ENCODE measurements at regions of chr15 and their contacts with region 1.

Region 1: DNA sequence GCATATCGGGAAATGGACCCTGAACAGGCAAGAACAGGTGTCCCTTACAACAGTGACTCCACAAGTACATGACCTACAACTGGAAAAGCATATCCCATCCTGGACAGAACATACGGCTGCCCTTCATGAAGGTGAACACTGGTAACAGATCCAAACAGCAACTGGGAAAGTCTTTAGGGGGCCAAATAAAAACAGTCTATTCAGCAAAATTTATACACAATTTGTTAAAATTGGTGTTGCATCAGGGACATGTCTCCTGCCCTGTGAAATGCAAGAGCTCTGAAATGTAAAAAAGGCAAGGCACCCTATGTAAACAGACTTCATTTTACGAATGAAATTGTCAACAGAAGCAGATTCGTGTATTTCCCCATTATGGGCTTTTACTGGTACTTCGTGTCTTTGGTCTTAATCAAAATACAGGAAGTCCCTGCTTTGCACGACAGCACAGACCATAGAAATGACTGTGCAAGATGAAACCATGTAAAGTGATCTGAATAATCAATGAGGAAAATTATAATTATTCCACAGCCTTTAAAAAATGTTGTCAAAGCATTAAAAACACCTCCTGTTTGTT is 127.3 kb upstream of the THBS1 start:
- DNase-seq: peak; percentile 31
- ATAC-seq: peak; percentile 93
- H3K4me3 ChIP-seq: no peak overlapping the region
- H3K27ac ChIP-seq: peak overlapping the region; percentile 46; the same call in 1 of the 2 replicates
- H3K4me1 ChIP-seq: peaks cover 5% of the 10 kb centered on the region; the same call in 1 of the 2 replicates
- H3K27me3 ChIP-seq: no peaks in the 10 kb centered on the region
- CTCF ChIP-seq: no peak
- EP300 ChIP-seq: peak; percentile 76 to 81; a peak in 3 of 4 replicates
- POLR2A ChIP-seq: no peak
- RAD21 ChIP-seq: no peak

Region 2: GRCh38 chr15:39411102-39411989 is 42.2 kb before region 1 on chr15:
- CTCF ChIA-PET with region 1: no interaction called
- POLR2A ChIA-PET with region 1: no interaction called
- RAD21 ChIA-PET with region 1: no interaction called
- SMC1A ChIA-PET with region 1: no interaction called
- in situ Hi-C with region 1: no loop called
- intact Hi-C with region 1: loop called (anchors 1 kb)
- DNase-seq: peak; percentile 78
- ATAC-seq: peak; percentile 97
- H3K4me3 ChIP-seq: no peak overlapping the region
- H3K27ac ChIP-seq: no peak overlapping the region
- H3K4me1 ChIP-seq: peaks cover 21% of the 10 kb centered on the region
- H3K27me3 ChIP-seq: no peaks in the 10 kb centered on the region
- CTCF ChIP-seq: no peak
- EP300 ChIP-seq: peak; percentile 58 to 63; a peak in 2 of 4 replicates
- POLR2A ChIP-seq: no peak
- RAD21 ChIP-seq: no peak

Region 3: GRCh38 chr15:39504808-39505207 is 51.2 kb after region 1 on chr15:
- CTCF ChIA-PET with region 1: no interaction called
- POLR2A ChIA-PET with region 1: no interaction called
- RAD21 ChIA-PET with region 1: no interaction called
- SMC1A ChIA-PET with region 1: no interaction called
- in situ Hi-C with region 1: no loop called
- intact Hi-C with region 1: no loop called
- DNase-seq: no peak
- ATAC-seq: no peak
- H3K4me3 ChIP-seq: no peak overlapping the region
- H3K27ac ChIP-seq: no peak overlapping the region
- H3K4me1 ChIP-seq: 0 out of 2 replicates have a peak, but pooled peaks cover 3% of the 10 kb centered on the region
- H3K27me3 ChIP-seq: no peaks in the 10 kb centered on the region; a peak in 1 of 4 replicates
- CTCF ChIP-seq: no peak
- EP300 ChIP-seq: no peak
- POLR2A ChIP-seq: no peak
- RAD21 ChIP-seq: no peak

Region 4: GRCh38 chr15:39621210-39621609 is 167.6 kb after region 1 on chr15:
- CTCF ChIA-PET with region 1: no interaction called
- POLR2A ChIA-PET with region 1: no interaction called
- RAD21 ChIA-PET with region 1: no interaction called
- SMC1A ChIA-PET with region 1: no interaction called
- in situ Hi-C with region 1: no loop called
- intact Hi-C with region 1: no loop called
- DNase-seq: no peak
- ATAC-seq: no peak
- H3K4me3 ChIP-seq: no peak overlapping the region
- H3K27ac ChIP-seq: no peak overlapping the region
- H3K4me1 ChIP-seq: peaks cover 30% of the 10 kb centered on the region
- H3K27me3 ChIP-seq: no peaks in the 10 kb centered on the region
- CTCF ChIP-seq: no peak
- EP300 ChIP-seq: no peak
- POLR2A ChIP-seq: no peak
- RAD21 ChIP-seq: no peak